ENCODE measurements at regions of chr11 and their contacts with region 1.

Region 1: GRCh38 chr11:15101072-15101709 is 13.5 kb upstream of the INSC start:
- DNase-seq: peak; percentile 21 to 83
- H3K4me3 ChIP-seq: no peak overlapping the region
- H3K27ac ChIP-seq: no peak overlapping the region
- H3K4me1 ChIP-seq: no peaks in the 10 kb centered on the region; a peak in 1 of 7 replicates
- H3K27me3 ChIP-seq: no peaks in the 10 kb centered on the region; a peak in 1 of 7 replicates
- CTCF ChIP-seq: peak; percentile 87 to 95 (median 94)
- EP300 ChIP-seq: no peak
- POLR2A ChIP-seq: no peak
- RAD21 ChIP-seq: peak; percentile 92 to 93

Region 2: DNA sequence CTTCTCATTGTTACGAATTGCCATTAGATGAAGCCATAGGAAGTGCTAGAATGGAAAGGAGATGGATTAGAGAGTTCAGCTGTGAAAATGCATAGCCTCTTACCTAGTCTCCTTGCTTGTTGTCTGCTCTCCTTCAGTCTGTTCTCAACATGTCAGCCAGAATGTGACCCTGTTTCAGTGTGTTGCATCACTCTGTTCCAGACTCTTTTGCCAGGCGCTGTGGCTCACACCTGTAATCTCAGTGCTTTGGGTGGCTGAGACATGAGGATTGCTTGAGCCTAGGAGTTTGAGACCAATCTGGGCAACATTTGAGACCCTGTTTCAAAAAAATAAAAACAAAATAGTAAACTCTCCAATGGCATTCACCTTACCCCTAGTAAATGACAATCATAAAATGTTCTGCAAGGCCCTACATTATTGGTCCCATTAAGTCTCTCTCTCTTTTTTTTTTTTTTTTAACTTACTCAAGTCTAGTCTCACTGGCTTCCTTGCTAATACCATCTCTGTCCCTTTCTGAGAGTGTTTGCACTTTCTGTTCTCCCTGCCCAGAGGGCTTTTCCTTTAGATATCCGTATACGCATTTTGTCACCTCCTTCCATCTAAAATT is 248.5 kb before region 1 on chr11:
- CTCF ChIA-PET with region 1: no interaction called
- POLR2A ChIA-PET with region 1: no interaction called
- DNase-seq: no peak
- H3K4me3 ChIP-seq: no peak overlapping the region
- H3K27ac ChIP-seq: no peak overlapping the region
- H3K4me1 ChIP-seq: no peaks in the 10 kb centered on the region
- H3K27me3 ChIP-seq: no peaks in the 10 kb centered on the region
- CTCF ChIP-seq: no peak
- EP300 ChIP-seq: no peak
- POLR2A ChIP-seq: no peak
- RAD21 ChIP-seq: no peak

Region 3: GRCh38 chr11:14974515-14975251 is 126.5 kb before region 1 on chr11:
- CTCF ChIA-PET with region 1: interaction called, 22 read pairs
- POLR2A ChIA-PET with region 1: no interaction called
- DNase-seq: peak in 1 of 2 experiments; percentile 85
- H3K4me3 ChIP-seq: peak overlapping the region; percentile 34 to 55 (median 39); a peak in 7 of 8 replicates
- H3K27ac ChIP-seq: no peak overlapping the region
- H3K4me1 ChIP-seq: peaks cover 11 to 24% (median 15%) of the 10 kb centered on the region in 4 experiments
- H3K27me3 ChIP-seq: peaks cover 51 to 78% (median 63%) of the 10 kb centered on the region in 4 experiments
- CTCF ChIP-seq: peak; percentile 81 to 92 (median 82)
- EP300 ChIP-seq: no peak
- POLR2A ChIP-seq: no peak
- RAD21 ChIP-seq: peak; percentile 53 to 64

Region 4: GRCh38 chr11:15113381-15113780 is 12.2 kb after region 1 on chr11:
- CTCF ChIA-PET with region 1: interaction called, 39 read pairs
- POLR2A ChIA-PET with region 1: no interaction called
- DNase-seq: no peak
- H3K4me3 ChIP-seq: no peak overlapping the region
- H3K27ac ChIP-seq: no peak overlapping the region
- H3K4me1 ChIP-seq: peaks cover 0 to 3% (median under 1%) of the 10 kb centered on the region in 4 experiments; a peak in 1 of 7 replicates
- H3K27me3 ChIP-seq: peaks cover 1 to 26% (median 18%) of the 10 kb centered on the region in 4 experiments; a peak in 6 of 7 replicates
- CTCF ChIP-seq: no peak
- EP300 ChIP-seq: no peak
- POLR2A ChIP-seq: no peak
- RAD21 ChIP-seq: no peak

Region 5: DNA sequence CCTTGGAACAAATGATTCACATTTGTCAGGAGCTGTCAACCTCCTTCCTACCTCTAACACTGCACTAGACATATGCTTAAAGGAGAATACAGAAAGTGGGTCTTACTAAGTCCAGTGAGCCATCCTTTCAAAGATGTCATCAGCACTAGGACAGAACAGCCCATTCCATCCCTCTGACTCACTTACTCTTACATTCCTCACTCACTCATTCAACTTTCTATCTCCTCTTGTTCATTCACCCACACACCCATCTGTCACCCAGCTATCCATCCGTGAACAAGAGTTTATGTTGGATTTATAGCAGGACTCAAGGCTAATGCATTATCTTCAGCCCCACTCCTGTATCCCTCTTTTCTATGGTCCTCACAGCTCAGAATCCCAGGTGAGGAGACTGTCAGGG is 22.7 kb after region 1 on chr11:
- CTCF ChIA-PET with region 1: interaction called, 32 read pairs
- POLR2A ChIA-PET with region 1: no interaction called
- DNase-seq: no peak
- H3K4me3 ChIP-seq: no peak overlapping the region
- H3K27ac ChIP-seq: no peak overlapping the region
- H3K4me1 ChIP-seq: no peaks in the 10 kb centered on the region
- H3K27me3 ChIP-seq: no peaks in the 10 kb centered on the region
- CTCF ChIP-seq: no peak
- EP300 ChIP-seq: no peak
- POLR2A ChIP-seq: no peak
- RAD21 ChIP-seq: no peak

Region 6: GRCh38 chr11:15159085-15159484 is 57.9 kb after region 1 on chr11:
- CTCF ChIA-PET with region 1: interaction called, 81 read pairs
- POLR2A ChIA-PET with region 1: no interaction called
- DNase-seq: no peak
- H3K4me3 ChIP-seq: no peak overlapping the region
- H3K27ac ChIP-seq: no peak overlapping the region
- H3K4me1 ChIP-seq: no peaks in the 10 kb centered on the region
- H3K27me3 ChIP-seq: no peaks in the 10 kb centered on the region
- CTCF ChIP-seq: peak; percentile 15 to 73 (median 69)
- EP300 ChIP-seq: no peak
- POLR2A ChIP-seq: no peak
- RAD21 ChIP-seq: peak; percentile 78 to 80

Region 7: DNA sequence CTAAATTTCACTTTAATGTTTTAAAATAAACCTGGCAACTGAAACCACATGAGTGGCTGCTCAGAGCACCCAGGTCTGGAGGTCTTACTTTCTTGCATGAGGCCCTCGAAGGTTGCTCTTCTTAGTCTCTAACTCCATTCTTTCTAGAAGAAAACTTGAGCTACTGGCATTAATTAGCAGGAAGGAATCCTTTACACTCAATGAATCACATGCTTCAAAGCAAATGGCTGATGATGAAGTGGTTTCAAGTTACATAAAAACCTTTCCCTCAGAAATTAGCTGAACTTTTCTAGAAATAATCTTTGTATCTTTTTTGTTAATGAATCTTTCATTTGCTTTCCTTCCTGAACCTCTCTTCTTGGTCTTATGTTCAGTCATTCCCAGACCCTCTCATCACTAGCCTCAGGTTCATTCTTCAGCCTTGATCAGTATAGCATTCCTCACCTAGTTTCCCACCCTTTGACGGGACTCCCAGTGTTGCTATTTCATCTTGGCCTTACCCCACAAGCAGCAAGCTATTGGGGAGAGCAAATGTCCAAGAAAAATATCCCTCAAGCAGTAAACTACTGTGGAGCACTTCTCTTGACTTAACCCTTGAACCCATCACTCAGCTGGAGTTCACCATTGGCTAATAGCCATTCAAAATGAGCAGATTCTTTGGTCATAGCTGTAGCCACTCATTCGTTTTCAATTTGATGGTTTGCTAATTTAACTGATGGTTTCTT is 88.6 kb after region 1 on chr11:
- CTCF ChIA-PET with region 1: interaction called, 15 read pairs
- POLR2A ChIA-PET with region 1: no interaction called
- DNase-seq: no peak
- H3K4me3 ChIP-seq: no peak overlapping the region
- H3K27ac ChIP-seq: no peak overlapping the region
- H3K4me1 ChIP-seq: 0 out of 7 replicates have a peak, but pooled peaks cover 0 to 2% (median 0%) of the 10 kb centered on the region in 4 experiments
- H3K27me3 ChIP-seq: no peaks in the 10 kb centered on the region
- CTCF ChIP-seq: no peak
- EP300 ChIP-seq: no peak
- POLR2A ChIP-seq: no peak
- RAD21 ChIP-seq: no peak

Region 8: DNA sequence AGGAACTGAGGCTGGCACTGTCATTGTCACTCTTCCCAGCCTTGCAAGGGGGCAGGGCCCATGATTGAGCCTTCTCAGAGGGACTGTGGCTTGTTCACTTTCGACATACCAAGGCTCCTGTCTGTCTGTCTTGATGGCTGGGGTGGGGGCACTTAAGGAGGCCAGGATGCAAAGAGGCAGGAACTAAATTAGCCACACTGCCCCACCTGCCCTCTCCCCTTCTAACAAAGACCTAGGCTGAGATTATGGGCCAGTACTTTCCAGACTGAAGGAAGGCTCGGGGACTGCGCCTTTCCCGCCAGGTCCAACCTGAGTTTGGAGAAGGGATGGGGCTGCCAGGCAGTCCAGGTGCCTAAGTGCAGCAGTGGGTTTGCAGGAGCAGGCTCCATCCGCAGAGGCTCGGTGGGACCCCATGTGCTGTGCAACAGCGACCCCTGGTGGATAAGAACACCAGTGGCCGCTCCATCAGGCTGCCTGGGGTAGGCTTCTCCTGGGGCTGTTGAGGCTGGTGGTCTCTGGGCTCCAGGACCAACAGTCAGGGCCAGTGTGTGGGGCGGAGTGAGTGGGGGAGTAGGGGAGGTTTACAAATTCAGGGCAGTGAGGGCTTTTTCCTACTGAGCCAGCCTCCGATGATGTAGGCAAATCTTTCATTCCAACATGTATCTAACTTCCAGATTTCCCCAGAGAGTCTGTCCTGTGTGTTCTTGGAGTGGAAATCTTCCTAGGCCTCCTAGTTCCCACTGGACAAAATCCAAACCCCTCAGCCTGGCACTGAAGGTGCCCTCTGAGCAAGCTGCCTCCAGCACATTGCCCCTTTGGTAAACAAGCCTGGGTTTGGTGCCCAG is 107.4 kb after region 1 on chr11:
- CTCF ChIA-PET with region 1: interaction called, 177 read pairs
- POLR2A ChIA-PET with region 1: no interaction called
- DNase-seq: peak; percentile 59 to 92
- H3K4me3 ChIP-seq: no peak overlapping the region
- H3K27ac ChIP-seq: no peak overlapping the region
- H3K4me1 ChIP-seq: peaks cover 0 to 2% (median 0%) of the 10 kb centered on the region in 4 experiments; a peak in 1 of 7 replicates
- H3K27me3 ChIP-seq: no peaks in the 10 kb centered on the region; a peak in 1 of 7 replicates
- CTCF ChIP-seq: peak; percentile 95 to 97 (median 95)
- EP300 ChIP-seq: no peak
- POLR2A ChIP-seq: no peak
- RAD21 ChIP-seq: peak; percentile 99 to 100

Region 9: GRCh38 chr11:15622231-15622890 is 521.2 kb after region 1 on chr11:
- CTCF ChIA-PET with region 1: no interaction called
- POLR2A ChIA-PET with region 1: no interaction called
- DNase-seq: no peak
- H3K4me3 ChIP-seq: no peak overlapping the region
- H3K27ac ChIP-seq: no peak overlapping the region
- H3K4me1 ChIP-seq: peaks cover 0 to 5% (median 0%) of the 10 kb centered on the region in 4 experiments; a peak in 2 of 7 replicates
- H3K27me3 ChIP-seq: no peaks in the 10 kb centered on the region
- CTCF ChIP-seq: no peak
- EP300 ChIP-seq: no peak
- POLR2A ChIP-seq: no peak
- RAD21 ChIP-seq: no peak

Measured in H1 (cell line).